ENCODE measurements at regions of chr11 and their contacts with region 1.

Region 1: GRCh38 chr11:128506999-128507611 is 80.3 kb downstream of the ETS1 start:
- DNase-seq: peak; percentile 82
- H3K4me3 Mint-ChIP-seq: peak overlapping the region; percentile 77
- H3K27ac Mint-ChIP-seq: peak overlapping the region; percentile 97
- H3K4me1 Mint-ChIP-seq: peaks cover 88% of the 10 kb centered on the region
- H3K27me3 Mint-ChIP-seq: no peaks in the 10 kb centered on the region

Region 2: DNA sequence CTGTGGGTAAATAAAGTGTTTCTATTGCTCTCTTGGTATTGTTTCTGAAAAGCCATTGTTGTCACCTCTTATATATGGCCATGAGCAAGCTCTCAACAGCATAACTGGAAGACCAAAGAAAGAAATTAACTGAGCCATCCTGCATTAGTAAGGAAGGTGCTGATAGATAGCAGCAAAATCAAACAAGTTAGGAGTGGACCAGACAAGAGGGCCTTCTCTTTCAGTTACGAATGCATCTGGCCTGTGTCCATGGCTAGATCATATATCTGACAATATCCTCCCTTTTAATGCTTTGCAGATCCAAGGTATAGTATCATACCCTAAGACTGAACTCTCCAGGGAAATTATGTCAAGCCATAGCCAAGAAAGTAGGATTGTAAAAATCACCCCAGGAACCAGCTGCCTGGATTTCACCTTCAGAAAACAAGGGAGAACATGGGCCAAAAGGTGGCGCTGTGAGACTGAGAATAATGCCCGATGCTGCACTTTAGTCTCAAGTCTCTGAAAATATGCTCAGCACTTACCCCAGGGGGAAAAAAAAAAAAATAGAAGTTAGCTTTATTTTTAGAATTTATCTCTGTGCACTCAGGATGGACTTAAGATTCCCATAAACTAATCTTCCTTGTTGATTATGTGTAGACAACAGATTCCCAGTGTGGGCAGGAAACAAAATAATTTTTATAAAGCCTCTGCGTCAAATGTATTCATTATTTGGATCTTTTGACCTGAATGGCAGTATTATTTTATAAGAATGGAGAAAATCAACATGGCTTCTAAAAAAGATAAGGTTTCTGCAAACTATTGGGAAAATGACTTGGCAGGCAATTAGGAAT is 334.8 kb before region 1 on chr11:
- CTCF ChIA-PET with region 1: interaction called, 3 read pairs
- intact Hi-C with region 1: loop called (anchors 2 kb)
- DNase-seq: peak; percentile 96
- H3K4me3 Mint-ChIP-seq: no peak overlapping the region
- H3K27ac Mint-ChIP-seq: no peak overlapping the region
- H3K4me1 Mint-ChIP-seq: peaks cover 7% of the 10 kb centered on the region
- H3K27me3 Mint-ChIP-seq: no peaks in the 10 kb centered on the region

Region 3: DNA sequence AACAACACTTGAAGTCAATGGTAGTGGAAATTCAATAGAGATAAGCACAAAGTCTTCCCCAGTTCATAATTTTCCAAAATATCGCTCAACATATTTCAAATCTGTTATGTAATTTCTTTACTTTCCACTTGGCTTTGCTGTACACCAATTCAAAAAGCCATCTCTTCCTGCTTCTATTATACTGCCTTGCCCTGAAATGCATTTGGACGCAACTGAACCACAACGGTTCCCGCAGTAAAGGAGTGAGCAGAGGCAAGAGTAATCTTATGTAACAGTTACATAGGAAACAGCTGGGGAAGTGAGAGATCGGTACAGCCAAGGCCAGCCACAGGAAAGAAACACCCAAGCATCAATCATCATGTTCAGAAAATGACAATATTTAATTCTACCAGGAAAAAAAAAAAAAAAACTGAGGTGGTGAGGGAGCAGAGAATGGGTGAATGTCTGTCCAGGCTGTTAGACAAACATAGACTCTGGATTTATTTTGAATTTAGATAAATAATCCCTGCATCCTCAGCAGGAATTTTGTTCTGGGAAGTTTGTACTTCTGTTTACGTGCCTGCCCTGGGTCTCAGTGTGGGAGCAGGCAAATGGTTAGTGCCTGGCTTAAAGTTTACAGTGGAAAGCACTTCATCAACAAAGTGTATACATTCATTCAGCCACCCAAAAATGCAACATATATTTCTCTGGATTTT is 311.9 kb before region 1 on chr11:
- CTCF ChIA-PET with region 1: no interaction called
- intact Hi-C with region 1: loop called (anchors 2 kb)
- DNase-seq: peak; percentile 77
- H3K4me3 Mint-ChIP-seq: peak overlapping the region; percentile 6
- H3K27ac Mint-ChIP-seq: peak overlapping the region; percentile 32
- H3K4me1 Mint-ChIP-seq: peaks cover 42% of the 10 kb centered on the region
- H3K27me3 Mint-ChIP-seq: no peaks in the 10 kb centered on the region

Region 4: DNA sequence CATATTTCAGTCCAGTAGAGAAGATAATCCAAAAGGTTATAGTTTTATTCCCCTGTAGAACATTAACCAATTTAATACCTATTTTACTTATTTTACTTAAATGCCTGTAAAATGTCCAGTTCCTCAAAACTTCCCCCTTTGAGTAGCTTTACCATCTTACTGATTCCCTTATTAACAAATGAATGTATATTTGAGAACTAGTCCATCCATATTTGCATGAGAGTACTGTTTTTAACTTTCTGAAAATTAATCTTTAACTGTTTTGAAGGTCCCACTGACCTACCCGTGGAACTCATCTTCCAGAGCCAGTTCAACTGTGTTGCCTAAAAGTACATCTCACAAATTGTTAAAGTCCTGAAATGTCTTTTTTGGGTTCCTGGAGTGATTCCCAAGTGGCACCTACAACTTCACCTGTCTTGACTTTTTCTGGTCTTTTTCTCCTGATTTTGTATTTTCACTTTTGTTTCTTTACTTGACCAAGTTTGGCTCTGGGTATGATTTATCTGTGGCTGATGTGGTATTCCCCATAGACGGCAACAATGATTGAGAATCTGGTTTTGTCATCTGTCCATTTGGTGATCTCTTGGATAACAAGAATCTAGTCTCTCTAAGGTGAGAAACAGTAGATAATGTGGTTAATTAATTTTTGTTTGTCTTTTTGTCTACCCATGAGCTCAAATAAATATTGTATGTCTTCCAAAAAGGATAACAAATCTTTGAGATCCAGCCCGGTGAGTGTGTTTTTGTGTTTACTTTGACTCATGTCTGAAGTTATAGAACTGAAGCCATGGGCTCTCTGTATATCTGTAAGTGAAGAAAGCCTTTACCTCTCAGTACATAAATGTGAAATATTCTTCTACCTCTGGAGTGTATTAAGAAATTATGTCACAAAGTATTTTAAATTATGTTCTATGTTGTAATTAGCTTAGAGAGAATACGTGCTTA is 94.0 kb before region 1 on chr11:
- CTCF ChIA-PET with region 1: no interaction called
- intact Hi-C with region 1: loop called (anchors 2 kb)
- DNase-seq: no peak
- H3K4me3 Mint-ChIP-seq: no peak overlapping the region
- H3K27ac Mint-ChIP-seq: peak overlapping the region; percentile 2
- H3K4me1 Mint-ChIP-seq: peaks cover 72% of the 10 kb centered on the region
- H3K27me3 Mint-ChIP-seq: no peaks in the 10 kb centered on the region

Region 5: DNA sequence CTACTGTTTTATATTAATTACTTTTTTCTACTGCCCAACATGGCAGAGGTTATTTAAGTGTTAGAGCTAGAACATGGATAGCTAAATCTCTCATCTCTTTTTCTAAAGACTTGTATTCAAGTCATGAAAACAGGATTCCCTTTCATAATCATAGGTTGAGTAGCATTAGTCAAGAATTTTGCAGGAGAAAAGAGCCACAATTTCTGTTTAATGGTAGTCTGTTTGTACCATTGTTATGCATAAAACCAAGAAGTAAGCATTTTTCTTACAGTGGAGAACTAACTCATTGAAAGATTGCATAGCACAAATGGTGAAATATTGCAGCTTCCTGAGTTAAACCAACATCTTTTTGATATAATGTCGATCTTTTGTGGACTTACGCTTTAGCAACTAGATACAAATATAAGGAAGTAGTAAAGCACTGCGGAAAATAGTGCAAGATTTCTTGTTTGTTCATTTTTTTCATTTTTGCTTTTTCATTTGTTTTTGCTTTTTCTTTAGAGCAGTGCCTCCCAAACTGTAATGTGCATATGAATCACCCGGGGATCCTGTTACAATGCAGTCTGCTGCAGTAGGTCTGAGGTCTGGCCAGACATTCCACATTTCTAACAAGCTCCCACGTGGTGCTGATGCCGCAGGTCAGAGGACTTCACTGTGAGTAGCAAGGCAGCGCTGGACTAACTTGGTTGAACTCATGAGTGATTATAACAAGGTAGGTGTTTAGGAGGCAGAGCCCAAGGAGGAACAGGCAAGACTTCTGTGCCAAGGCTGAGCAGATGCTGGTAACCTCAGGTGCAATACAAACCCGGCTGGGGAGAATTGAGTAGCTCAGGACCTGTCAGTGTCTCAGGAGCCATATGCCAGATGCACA is 75.6 kb after region 1 on chr11:
- CTCF ChIA-PET with region 1: no interaction called
- intact Hi-C with region 1: loop called (anchors 1 kb)
- DNase-seq: peak; percentile 50
- H3K4me3 Mint-ChIP-seq: peak overlapping the region; percentile 69
- H3K27ac Mint-ChIP-seq: peak overlapping the region; percentile 78
- H3K4me1 Mint-ChIP-seq: peaks cover 62% of the 10 kb centered on the region
- H3K27me3 Mint-ChIP-seq: no peaks in the 10 kb centered on the region

Region 6: GRCh38 chr11:128695539-128696221 is 188.6 kb after region 1 on chr11:
- CTCF ChIA-PET with region 1: no interaction called
- intact Hi-C with region 1: loop called (anchors 2 kb)
- DNase-seq: peak; percentile 58
- H3K4me3 Mint-ChIP-seq: peak overlapping the region; percentile 90
- H3K27ac Mint-ChIP-seq: peak overlapping the region; percentile 94
- H3K4me1 Mint-ChIP-seq: peaks cover 54% of the 10 kb centered on the region
- H3K27me3 Mint-ChIP-seq: peaks cover 7% of the 10 kb centered on the region

Measured in activated naive CD4-positive, alpha-beta T cell treated with anti-CD3 and anti-CD28 coated beads for 36 hours (primary cell).